ENCODE measurements at regions of chr1 and their contacts with region 1.

Region 1: DNA sequence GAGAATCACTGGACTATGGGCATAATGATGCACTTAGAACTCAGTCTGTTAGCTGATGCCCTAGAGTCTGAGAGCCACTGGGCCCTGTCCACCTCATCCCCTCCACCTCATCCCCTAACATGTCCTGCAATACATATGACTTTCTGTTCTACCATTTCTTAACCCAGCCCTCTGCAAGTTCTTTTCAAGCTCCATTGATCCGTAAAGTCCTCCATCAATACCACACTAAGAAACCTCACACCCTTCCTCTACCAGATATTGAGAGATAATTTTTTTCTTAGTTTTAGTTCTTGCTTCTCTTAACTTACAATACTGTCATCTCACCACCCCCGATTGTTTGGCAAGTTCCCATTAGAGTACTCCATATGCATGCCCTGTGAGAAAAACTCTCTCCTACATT is 22.1 kb downstream of the FCRL4 start:
- DNase-seq: no peak
- H3K4me3 ChIP-seq: no peak overlapping the region
- H3K27ac ChIP-seq: no peak overlapping the region
- H3K4me1 ChIP-seq: peaks cover 5 to 22% (median 9%) of the 10 kb centered on the region in 6 donors
- H3K27me3 ChIP-seq: peaks cover 0 to 5% (median 0%) of the 10 kb centered on the region in 7 donors
- CTCF ChIP-seq: no peak
- POLR2A ChIP-seq: no peak

Region 2: DNA sequence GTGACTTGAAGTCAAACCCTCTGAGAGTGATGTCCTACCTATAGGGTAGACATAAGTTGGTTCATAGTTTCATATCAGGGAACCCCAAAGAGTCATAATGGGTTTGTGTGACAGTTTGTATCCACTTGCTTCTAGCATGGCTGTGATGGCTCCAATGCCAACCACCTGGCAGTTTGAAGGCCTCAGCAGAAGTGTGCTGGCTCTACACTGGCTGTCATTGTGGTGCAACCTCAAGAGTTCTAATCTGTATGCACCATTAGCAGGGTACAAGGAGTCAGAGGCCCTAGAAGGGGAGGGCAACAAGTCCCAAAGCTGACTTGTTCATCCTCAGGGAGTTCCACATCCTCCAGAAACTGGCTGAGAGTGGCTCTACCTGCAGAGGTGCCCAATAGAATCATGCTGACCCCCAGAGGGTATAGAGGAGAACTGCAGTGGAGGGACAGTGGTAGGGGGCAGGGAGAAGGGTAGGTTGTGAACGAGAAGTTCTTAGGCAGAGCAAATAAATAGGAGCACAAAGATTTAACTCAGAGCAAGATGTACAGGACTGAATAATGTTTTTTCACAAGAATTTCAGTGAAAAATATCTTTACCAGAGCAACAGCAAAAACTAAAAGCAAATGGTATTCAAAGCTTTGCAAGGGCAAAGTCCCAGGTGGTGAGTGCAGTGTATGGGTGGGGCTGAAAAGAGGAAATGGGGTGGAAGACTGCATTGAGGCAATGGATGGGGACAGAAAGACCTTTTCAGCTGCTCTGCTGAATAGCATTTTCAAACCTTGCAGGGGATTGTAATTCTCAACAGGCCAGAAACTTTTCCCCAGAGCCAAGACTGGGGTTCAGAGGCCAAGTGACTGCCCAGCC is 198.0 kb after region 1 on chr1:
- intact Hi-C with region 1: loop called (anchors 10 kb)
- DNase-seq: no peak
- H3K4me3 ChIP-seq: peak overlapping the region in 3 of 8 donors; percentile 3 to 56 (median 6)
- H3K27ac ChIP-seq: peak overlapping the region in 7 of 8 donors; percentile 14 to 81 (median 52)
- H3K4me1 ChIP-seq: peaks cover 0 to 76% (median 33%) of the 10 kb centered on the region in 6 donors
- H3K27me3 ChIP-seq: peaks cover 0 to 9% (median 0%) of the 10 kb centered on the region in 7 donors
- CTCF ChIP-seq: peak; percentile 31 to 80 (median 69)
- POLR2A ChIP-seq: peak in 1 of 3 donors; percentile 41